H1 (cell line): ENCODE measurements at regions of chr1 and their contacts with region 1.

Region 1: GRCh38 chr1:42958488-42959319 is at the start of gene SLC2A1:
- DNase-seq: peak; percentile 90 to 95
- H3K4me3 ChIP-seq: peak within 1 kb of the TSS; percentile 69 to 92 (median 91)
- H3K27ac ChIP-seq: peak within 1 kb of the TSS; percentile 87
- H3K4me1 ChIP-seq: peaks cover 17 to 49% (median 36%) of the 10 kb centered on the region in 4 experiments
- H3K27me3 ChIP-seq: no peaks in the 10 kb centered on the region
- CTCF ChIP-seq: peak in 1 of 3 experiments; percentile 2; a peak in 1 of 4 replicates
- EP300 ChIP-seq: no peak; a peak in 1 of 3 replicates
- POLR2A ChIP-seq: peak; percentile 95 to 97
- RAD21 ChIP-seq: no peak
- total RNA-seq, gene SLC2A1: 230 and 239 TPM in 2 replicates

Region 2: DNA sequence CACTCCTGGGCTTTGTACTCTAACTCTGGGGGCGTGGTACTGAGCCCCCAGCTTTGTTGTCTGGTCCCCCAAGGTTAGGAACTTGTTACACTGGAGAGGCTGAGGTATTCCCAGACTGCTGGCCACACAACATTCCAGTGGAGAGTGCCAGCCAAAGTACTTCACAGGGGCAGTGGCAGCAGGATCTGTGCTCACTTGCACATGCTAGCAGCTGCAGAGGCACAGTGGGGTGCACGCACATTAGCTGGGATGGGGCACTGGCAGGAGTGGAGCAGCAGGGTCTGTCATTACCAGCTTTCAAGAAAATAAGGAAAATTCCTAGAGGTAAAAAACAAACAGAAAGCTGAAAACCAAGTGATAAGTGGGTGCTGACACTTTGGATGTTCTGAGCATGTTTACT is 81.3 kb before region 1 on chr1:
- CTCF ChIA-PET with region 1: no interaction called
- POLR2A ChIA-PET with region 1: no interaction called
- DNase-seq: no peak
- H3K4me3 ChIP-seq: no peak overlapping the region
- H3K27ac ChIP-seq: no peak overlapping the region
- H3K4me1 ChIP-seq: peaks cover 0 to 3% (median under 1%) of the 10 kb centered on the region in 4 experiments; a peak in 3 of 7 replicates
- H3K27me3 ChIP-seq: no peaks in the 10 kb centered on the region
- CTCF ChIP-seq: no peak
- EP300 ChIP-seq: no peak
- POLR2A ChIP-seq: no peak
- RAD21 ChIP-seq: no peak

Region 3: DNA sequence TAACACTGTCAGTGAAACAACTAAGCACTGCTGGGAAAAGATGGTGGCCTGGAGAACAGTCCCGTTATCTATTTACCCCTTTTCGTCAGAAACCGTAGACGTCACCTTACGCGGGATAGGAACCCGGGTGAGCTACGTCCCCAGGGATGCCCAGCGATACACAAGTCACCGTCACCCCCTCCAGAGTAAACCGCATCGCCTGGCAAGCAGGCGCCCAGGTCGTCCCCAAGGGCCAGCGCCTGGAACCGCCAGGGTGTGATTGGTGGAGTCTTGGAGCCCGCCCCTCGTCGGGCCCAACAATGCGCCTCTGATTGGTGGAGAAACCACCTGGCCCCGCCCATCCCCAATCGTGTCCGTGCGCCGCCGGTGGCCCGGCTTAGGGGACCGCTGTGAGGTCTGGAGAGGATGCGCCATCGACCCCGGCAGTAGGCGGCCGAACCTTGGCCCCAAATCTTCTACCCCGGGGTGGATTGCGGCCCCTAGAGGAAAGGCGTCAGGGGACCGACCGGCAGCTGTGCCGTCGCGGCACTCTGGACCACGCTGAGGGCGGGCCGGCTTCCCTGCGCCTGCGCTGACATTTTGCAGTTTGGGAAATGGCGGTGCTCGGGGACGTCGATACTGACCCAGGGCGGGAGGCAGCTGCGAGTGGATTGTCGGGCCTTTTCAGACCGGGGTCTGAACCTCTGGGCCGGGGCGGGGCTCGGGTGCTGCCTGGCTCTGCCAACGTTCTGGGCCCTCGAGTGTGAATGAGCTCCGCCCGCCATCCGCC is 34.4 kb before region 1 on chr1:
- CTCF ChIA-PET with region 1: interaction called, 4 read pairs
- POLR2A ChIA-PET with region 1: interaction called, 13 read pairs
- DNase-seq: peak; percentile 84 to 98
- H3K4me3 ChIP-seq: peak overlapping the region; percentile 54 to 74 (median 60)
- H3K27ac ChIP-seq: peak overlapping the region; percentile 81; the same call in 1 of the 2 replicates
- H3K4me1 ChIP-seq: peaks cover 4 to 10% (median 7%) of the 10 kb centered on the region in 4 experiments; a peak in 6 of 7 replicates
- H3K27me3 ChIP-seq: no peaks in the 10 kb centered on the region
- CTCF ChIP-seq: peak in 2 of 3 experiments; percentile 2 to 33; a peak in 2 of 4 replicates
- EP300 ChIP-seq: no peak
- POLR2A ChIP-seq: peak; percentile 73 to 93
- RAD21 ChIP-seq: peak in 1 of 2 experiments; percentile 7; a peak in 1 of 4 replicates

Region 4: DNA sequence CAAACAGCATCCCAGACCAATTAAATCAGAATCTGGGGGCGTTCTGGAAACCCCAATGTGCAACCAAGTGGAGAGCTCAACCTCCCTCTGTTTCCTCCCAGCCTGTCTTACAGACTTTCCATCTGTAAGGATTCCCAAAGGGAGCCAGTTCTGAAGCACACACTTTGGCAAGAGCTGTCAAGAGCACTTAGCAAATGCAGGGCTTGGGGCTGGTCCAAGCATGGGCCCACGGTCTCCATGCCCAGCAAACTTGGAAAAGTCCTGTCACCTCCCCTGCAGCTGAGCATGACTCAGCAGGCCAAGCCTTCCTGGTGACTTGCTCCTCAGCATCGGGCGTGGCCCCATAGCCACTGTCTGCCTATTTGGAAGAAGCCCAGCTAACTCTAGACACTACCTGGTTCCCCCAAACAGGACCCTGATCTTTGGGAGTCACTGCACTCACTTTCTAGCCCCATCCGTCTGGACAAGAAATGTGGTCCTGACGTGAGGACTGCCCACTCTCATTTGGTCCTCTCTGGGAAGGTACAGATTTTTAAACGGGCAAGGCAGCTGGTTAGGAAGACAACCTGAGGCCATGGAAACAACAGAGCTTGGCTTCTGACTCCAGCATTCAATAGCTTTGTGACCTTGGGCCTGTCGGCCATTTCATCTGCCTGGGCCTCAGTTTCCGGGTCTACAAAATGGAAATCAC is 16.9 kb before region 1 on chr1:
- CTCF ChIA-PET with region 1: interaction called, 10 read pairs
- POLR2A ChIA-PET with region 1: interaction called, 29 read pairs
- DNase-seq: no peak
- H3K4me3 ChIP-seq: no peak overlapping the region
- H3K27ac ChIP-seq: no peak overlapping the region
- H3K4me1 ChIP-seq: peaks cover 5 to 31% (median 15%) of the 10 kb centered on the region in 4 experiments
- H3K27me3 ChIP-seq: no peaks in the 10 kb centered on the region
- CTCF ChIP-seq: no peak
- EP300 ChIP-seq: no peak
- POLR2A ChIP-seq: no peak
- RAD21 ChIP-seq: no peak

Region 5: GRCh38 chr1:42979896-42980800 is 21.4 kb after region 1 on chr1:
- CTCF ChIA-PET with region 1: interaction called, 3 read pairs
- POLR2A ChIA-PET with region 1: interaction called, 10 read pairs
- DNase-seq: no peak
- H3K4me3 ChIP-seq: no peak overlapping the region
- H3K27ac ChIP-seq: no peak overlapping the region
- H3K4me1 ChIP-seq: peaks cover 6 to 16% (median 12%) of the 10 kb centered on the region in 4 experiments
- H3K27me3 ChIP-seq: no peaks in the 10 kb centered on the region
- CTCF ChIP-seq: no peak
- EP300 ChIP-seq: no peak
- POLR2A ChIP-seq: no peak
- RAD21 ChIP-seq: no peak

Region 6: GRCh38 chr1:43137445-43138052 is 178.8 kb after region 1 on chr1:
- CTCF ChIA-PET with region 1: no interaction called
- POLR2A ChIA-PET with region 1: no interaction called
- DNase-seq: no peak
- H3K4me3 ChIP-seq: no peak overlapping the region
- H3K27ac ChIP-seq: no peak overlapping the region
- H3K4me1 ChIP-seq: no peaks in the 10 kb centered on the region
- H3K27me3 ChIP-seq: no peaks in the 10 kb centered on the region
- CTCF ChIP-seq: no peak
- EP300 ChIP-seq: no peak
- POLR2A ChIP-seq: no peak
- RAD21 ChIP-seq: no peak